Prostate gland (tissue), 2 donors: ENCODE measurements at regions of chr7 and their contacts with region 1.

Region 1: DNA sequence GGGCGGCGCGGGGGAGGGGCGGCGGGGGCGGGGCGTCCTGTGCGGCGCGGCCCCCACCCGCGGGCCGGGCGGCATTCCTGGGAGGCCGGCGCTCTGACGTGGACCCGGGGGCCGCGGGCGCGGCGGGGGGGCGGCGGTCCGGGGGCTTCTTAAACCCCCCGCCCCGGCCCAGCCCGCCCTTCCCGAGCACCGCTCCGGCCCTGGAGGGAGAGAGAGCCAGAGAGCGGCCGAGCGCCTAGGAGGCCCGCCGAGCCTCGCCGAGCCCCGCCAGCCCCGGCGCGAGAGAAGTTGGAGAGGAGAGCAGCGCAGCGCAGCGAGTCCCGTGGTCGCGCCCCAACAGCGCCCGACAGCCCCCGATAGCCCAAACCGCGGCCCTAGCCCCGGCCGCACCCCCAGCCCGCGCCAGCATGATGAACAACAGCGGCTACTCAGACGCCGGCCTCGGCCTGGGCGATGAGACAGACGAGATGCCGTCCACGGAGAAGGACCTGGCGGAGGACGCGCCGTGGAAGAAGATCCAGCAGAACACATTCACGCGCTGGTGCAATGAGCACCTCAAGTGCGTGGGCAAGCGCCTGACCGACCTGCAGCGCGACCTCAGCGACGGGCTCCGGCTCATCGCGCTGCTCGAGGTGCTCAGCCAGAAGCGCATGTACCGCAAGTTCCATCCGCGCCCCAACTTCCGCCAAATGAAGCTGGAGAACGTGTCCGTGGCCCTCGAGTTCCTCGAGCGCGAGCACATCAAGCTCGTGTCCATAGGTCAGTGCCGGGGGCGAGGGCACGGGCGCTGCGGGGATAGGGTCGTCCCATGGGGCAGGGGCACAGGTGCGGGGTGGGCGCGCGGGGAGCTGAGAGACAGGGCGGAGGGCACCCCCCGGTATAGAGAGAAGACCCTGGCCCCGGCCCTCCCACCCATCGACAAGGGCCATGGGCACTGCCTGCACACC is at the start of gene FLNC:
- DNase-seq: no peak
- H3K4me3 ChIP-seq: peak within 1 kb of the TSS; percentile 41 to 43
- H3K27ac ChIP-seq: peak within 1 kb of the TSS; percentile 74 to 78
- H3K4me1 ChIP-seq: no peaks in the 10 kb centered on the region
- H3K27me3 ChIP-seq: no peaks in the 10 kb centered on the region
- CTCF ChIP-seq: no peak
- POLR2A ChIP-seq: no peak
- total RNA-seq, gene FLNC: 104 to 150 TPM

Region 2: GRCh38 chr7:128739048-128739962 is 91.2 kb before region 1 on chr7 and contains the start of gene CALU:
- intact Hi-C with region 1: loop called (anchors 5 kb)
- DNase-seq: peak; percentile 97
- H3K4me3 ChIP-seq: peak within 1 kb of the TSS; percentile 58 to 95
- H3K27ac ChIP-seq: peak within 1 kb of the TSS; percentile 74 to 88
- H3K4me1 ChIP-seq: peaks cover 16% of the 10 kb centered on the region
- H3K27me3 ChIP-seq: no peaks in the 10 kb centered on the region
- CTCF ChIP-seq: peak in 1 of 4 experiments; percentile 24
- POLR2A ChIP-seq: peak; percentile 87
- total RNA-seq, gene CALU: 76.2 to 87.8 TPM

Region 3: DNA sequence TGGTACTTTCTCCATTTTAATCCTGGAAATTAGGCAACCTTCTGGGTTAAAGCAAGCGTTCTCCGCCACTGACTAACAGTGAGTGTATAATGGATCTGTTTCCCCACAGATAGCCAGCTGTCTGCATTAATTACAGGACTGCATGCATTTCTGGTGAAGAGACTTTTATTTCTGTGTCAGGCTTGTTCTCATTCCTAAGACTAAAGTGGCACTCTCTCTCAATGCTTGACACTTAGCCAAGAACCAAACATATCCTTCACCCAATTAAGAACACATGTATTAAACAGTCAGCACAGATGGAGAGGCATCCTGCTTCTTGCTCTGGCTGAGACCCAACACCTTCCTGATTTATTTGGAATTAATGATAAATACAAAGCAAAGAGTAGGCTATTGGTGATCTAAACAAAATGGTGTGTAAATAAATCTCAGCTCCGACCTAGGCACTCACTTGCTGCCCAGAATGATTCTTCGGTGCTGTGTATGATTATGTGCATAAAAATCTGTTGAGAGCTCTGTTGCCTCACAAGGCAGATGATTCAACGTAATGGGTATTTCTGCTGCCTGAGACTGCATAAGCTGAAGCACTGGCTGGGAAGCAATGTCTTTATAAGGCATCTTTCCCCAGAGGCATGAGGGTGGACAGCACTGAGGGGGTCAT is 74.6 kb before region 1 on chr7:
- intact Hi-C with region 1: loop called (anchors 2 kb)
- DNase-seq: no peak
- H3K4me3 ChIP-seq: no peak overlapping the region
- H3K27ac ChIP-seq: peak overlapping the region; percentile 9 to 47
- H3K4me1 ChIP-seq: no peaks in the 10 kb centered on the region
- H3K27me3 ChIP-seq: no peaks in the 10 kb centered on the region
- CTCF ChIP-seq: no peak
- POLR2A ChIP-seq: no peak

Region 4: GRCh38 chr7:128791121-128791961 is 39.2 kb before region 1 on chr7:
- intact Hi-C with region 1: loop called (anchors 5 kb)
- DNase-seq: peak; percentile 60
- H3K4me3 ChIP-seq: peak overlapping the region; percentile 75 to 89
- H3K27ac ChIP-seq: peak overlapping the region; percentile 76 to 77
- H3K4me1 ChIP-seq: no peaks in the 10 kb centered on the region
- H3K27me3 ChIP-seq: no peaks in the 10 kb centered on the region
- CTCF ChIP-seq: no peak
- POLR2A ChIP-seq: peak; percentile 33

Region 5: DNA sequence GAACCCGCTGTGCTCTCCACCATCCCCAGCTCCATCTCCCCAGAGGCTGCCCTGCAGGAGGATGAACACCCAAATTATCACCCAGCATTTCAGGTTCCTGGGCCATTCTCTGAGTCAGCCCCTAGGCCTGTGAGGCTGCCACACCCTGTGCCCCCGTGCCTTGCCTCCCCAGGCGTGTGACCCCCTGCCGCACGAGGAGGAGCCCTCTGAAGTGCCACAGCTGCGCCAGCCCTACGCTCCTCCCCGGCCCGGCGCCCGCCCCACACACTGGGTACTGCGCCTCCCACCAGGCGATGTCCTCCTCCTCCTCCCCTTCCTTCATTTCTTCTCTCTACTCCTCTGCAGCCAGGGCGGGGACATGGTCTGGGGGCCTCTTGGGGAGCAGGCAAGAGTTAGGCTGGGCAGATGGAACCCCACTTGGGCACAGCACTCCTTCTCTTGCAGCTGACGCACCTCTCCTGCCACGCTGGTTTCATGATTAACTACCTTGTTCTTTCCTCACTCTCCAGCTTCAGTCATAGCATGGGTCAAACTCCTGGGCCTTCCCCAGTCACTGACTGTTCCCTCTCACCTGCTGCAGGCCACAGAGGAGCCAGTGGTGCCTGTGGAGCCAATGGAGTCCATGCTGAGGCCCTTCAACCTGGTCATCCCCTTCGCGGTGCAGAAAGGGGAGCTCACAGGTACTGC is 19.4 kb after region 1 on chr7:
- intact Hi-C with region 1: no loop called
- DNase-seq: no peak
- H3K4me3 ChIP-seq: no peak overlapping the region
- H3K27ac ChIP-seq: no peak overlapping the region
- H3K4me1 ChIP-seq: no peaks in the 10 kb centered on the region
- H3K27me3 ChIP-seq: no peaks in the 10 kb centered on the region
- CTCF ChIP-seq: no peak
- POLR2A ChIP-seq: no peak